Activated CD4-positive, alpha-beta T cell treated with anti-CD3 and anti-CD28 coated beads, Interleukin-2, amount 10 ng/mL, durations not matched to agents 7 days and 5 days (primary cell): ENCODE measurements at regions of chr17 and their contacts with region 1.

Region 1: GRCh38 chr17:48113201-48113676 is 5.7 kb downstream of the SNX11 start:
- DNase-seq: peak; percentile 78
- H3K4me3 Mint-ChIP-seq: peak overlapping the region; percentile 24
- H3K27ac Mint-ChIP-seq: peak overlapping the region; percentile 95
- H3K4me1 Mint-ChIP-seq: peaks cover 45% of the 10 kb centered on the region
- H3K27me3 Mint-ChIP-seq: no peaks in the 10 kb centered on the region

Region 2: GRCh38 chr17:48101012-48101720 is 12.1 kb before region 1 on chr17 and contains the start of gene CBX1:
- CTCF ChIA-PET with region 1: interaction called, 9 read pairs
- POLR2A ChIA-PET with region 1: interaction called, 10 read pairs
- DNase-seq: peak; percentile 94
- H3K4me3 Mint-ChIP-seq: peak within 1 kb of the TSS; percentile 96
- H3K27ac Mint-ChIP-seq: peak within 1 kb of the TSS; percentile 95
- H3K4me1 Mint-ChIP-seq: peaks cover 61% of the 10 kb centered on the region
- H3K27me3 Mint-ChIP-seq: no peaks in the 10 kb centered on the region
- total RNA-seq, gene CBX1: 63.6 to 64.8 TPM